ENCODE measurements at regions of chr1 and their contacts with region 1.

Region 1: DNA sequence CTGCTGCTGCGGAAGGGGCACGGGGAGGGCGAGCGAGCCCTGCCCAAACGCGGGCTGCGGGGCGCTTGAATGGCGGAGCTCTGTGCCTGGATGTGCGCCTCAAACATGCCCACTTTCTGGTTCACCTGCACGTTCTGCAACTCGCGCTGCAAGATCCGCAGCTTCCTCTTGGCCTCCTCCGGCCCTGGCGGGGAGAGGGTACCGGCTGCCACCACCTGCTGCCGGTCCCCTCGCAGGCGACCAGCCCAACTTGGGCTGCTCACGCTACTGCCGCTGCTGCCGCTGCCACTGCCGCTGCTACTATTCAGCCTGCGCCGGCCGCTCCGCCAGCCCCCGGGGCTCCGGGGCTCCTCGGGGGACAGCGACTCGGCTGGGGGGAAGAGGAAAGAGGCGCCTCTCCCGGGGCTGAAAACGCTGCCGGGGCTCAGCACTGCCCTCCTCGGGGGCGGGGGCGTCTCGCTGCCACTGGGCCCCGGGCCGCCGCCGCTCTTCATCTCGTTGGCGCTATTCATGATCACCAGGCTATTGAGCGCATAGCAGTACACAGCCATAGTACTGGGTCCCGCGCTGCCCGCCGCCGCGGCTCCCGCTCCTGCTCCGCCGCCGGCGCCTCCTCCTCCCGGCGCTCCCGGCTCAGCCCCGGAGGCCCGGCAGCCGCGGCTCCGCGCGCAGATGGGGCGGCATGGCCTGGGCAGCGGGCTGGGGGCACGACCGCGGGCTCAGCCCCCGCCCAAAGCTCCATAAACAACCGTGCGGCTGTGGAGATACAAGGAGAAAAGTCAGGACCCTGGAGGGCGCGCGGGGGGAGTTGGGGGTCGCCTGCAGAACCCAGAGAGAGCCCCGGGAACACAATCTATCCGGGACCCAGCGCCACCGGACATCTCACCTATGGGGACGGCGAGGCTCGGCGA is 1.9 kb downstream of the ITPKB start:
- DNase-seq: peak; percentile 79
- ATAC-seq: peak; percentile 46
- H3K4me3 Mint-ChIP-seq: peak overlapping the region; percentile 88
- H3K27ac Mint-ChIP-seq: peak overlapping the region; percentile 85
- H3K4me1 Mint-ChIP-seq: peaks cover 42% of the 10 kb centered on the region
- H3K27me3 Mint-ChIP-seq: no peaks in the 10 kb centered on the region

Region 2: GRCh38 chr1:226407497-226408284 is 329.5 kb before region 1 on chr1 and contains the start of gene PARP1:
- CTCF ChIA-PET with region 1: no interaction called
- POLR2A ChIA-PET with region 1: no interaction called
- intact Hi-C with region 1: loop called in 1 of 2 experiments (anchors 5 kb)
- DNase-seq: peak; percentile 93
- ATAC-seq: peak; percentile 94
- H3K4me3 Mint-ChIP-seq: peak within 1 kb of the TSS; percentile 88
- H3K27ac Mint-ChIP-seq: peak within 1 kb of the TSS; percentile 94
- H3K4me1 Mint-ChIP-seq: peaks cover 42% of the 10 kb centered on the region
- H3K27me3 Mint-ChIP-seq: no peaks in the 10 kb centered on the region
- total RNA-seq, gene PARP1: 237 to 242 TPM

Region 3: DNA sequence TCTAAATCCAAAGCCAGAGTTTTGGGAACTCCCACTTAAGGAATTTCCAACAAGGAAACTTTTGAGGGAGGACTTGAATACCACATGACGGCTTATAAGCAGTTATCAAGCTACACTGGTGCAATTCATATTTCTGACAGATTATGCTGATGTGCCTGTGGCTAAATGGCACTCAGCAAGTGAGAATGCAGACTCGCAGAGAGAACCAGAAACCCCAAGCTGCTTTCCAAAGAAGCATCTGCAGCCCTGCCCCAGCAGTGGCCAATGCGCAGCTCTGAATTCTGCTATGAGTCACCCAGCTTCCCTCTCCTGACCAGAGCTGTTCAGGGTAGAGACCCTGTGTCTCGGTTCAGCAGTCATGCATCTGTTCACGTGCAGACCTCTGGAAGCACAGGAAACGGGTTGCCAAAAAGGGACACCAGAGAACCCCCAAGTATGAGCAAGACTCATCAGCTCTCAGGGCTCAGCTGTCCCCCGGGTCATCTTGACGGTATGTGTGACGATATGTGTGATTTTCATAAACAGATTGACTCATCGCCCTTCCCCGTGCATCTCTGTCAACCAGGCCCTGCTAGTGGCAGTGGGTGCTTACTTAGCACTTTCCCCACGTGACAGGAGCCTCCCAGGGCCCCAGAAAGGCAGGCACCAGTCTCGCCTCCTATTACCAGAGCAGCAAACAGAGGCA is 74.4 kb before region 1 on chr1:
- CTCF ChIA-PET with region 1: interaction called, 5 read pairs
- POLR2A ChIA-PET with region 1: interaction called, 4 read pairs
- intact Hi-C with region 1: loop called in 1 of 2 experiments (anchors 1 kb)
- DNase-seq: peak; percentile 91
- ATAC-seq: peak; percentile 93
- H3K4me3 Mint-ChIP-seq: peak overlapping the region; percentile 53
- H3K27ac Mint-ChIP-seq: peak overlapping the region; percentile 94
- H3K4me1 Mint-ChIP-seq: no peaks in the 10 kb centered on the region
- H3K27me3 Mint-ChIP-seq: no peaks in the 10 kb centered on the region

Region 4: DNA sequence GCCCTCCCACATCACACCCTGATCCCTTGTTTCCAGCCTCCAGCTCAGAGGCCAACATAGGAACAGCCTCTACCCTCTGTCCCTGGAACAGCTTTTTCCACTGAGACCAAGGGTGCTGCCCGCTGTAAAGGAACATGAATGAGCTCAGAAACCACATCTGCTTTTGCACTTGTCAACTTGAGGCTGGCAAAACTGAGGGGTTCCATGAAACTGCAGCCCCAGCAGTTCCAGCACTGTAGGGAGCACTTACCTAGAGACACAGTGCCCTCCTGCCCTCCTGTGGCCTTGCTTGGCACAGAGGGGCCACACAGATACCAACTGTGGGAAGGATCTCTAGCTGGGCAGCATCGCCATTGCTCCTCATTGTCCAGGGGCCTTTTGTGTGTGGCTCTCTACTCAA is 49.7 kb before region 1 on chr1:
- CTCF ChIA-PET with region 1: interaction called, 4 read pairs
- POLR2A ChIA-PET with region 1: interaction called, 3 read pairs
- intact Hi-C with region 1: loop called (anchors 1 to 2 kb)
- DNase-seq: peak; percentile 75
- ATAC-seq: peak; percentile 36
- H3K4me3 Mint-ChIP-seq: no peak overlapping the region
- H3K27ac Mint-ChIP-seq: peak overlapping the region; percentile 100
- H3K4me1 Mint-ChIP-seq: peaks cover 100% of the 10 kb centered on the region
- H3K27me3 Mint-ChIP-seq: no peaks in the 10 kb centered on the region

Region 5: GRCh38 chr1:226708342-226708780 is 28.8 kb before region 1 on chr1:
- CTCF ChIA-PET with region 1: interaction called, 10 read pairs
- POLR2A ChIA-PET with region 1: interaction called, 6 read pairs
- intact Hi-C with region 1: loop called (anchors 1 to 5 kb)
- DNase-seq: peak; percentile 63
- ATAC-seq: peak; percentile 75
- H3K4me3 Mint-ChIP-seq: peak overlapping the region; percentile 34
- H3K27ac Mint-ChIP-seq: peak overlapping the region; percentile 100
- H3K4me1 Mint-ChIP-seq: peaks cover 93% of the 10 kb centered on the region
- H3K27me3 Mint-ChIP-seq: no peaks in the 10 kb centered on the region

Region 6: GRCh38 chr1:226827968-226828513 is 90.9 kb after region 1 on chr1:
- CTCF ChIA-PET with region 1: interaction called, 5 read pairs
- POLR2A ChIA-PET with region 1: interaction called, 3 read pairs
- intact Hi-C with region 1: loop called (anchors 1 kb)
- DNase-seq: peak; percentile 99
- ATAC-seq: peak; percentile 99
- H3K4me3 Mint-ChIP-seq: peak overlapping the region; percentile 44
- H3K27ac Mint-ChIP-seq: peak overlapping the region; percentile 94
- H3K4me1 Mint-ChIP-seq: peaks cover 41% of the 10 kb centered on the region
- H3K27me3 Mint-ChIP-seq: no peaks in the 10 kb centered on the region

Region 7: DNA sequence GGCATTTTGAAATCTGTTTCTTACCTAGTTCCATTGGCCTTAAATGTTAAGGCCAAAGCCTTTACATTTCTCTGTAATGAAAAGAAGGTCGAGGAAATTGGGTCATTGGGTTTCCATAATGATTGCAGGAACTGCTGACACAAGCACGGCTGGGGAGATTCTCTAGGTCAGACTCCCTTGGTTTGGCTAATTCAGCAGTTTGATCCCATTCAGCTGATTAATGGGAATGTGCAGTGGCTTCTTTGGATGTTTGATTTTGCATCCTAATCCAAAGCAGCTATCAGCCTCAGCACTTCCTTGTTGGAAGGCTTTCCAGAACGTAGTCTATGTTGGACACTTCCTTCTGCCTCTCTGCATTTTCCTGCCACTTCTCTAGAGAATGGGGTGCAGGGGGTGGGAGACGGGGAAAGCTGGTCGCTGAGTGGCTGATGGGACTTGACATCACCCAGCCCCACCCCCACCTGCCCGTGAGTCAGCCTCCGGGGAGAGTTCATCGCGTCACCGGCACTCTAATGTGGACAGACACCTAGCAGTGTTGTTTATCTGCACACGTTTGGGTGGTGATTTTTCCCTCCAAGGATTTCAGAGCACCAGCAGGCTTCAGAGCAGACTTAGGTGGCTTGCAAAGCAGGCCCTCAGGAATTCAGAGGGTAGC is 138.6 kb after region 1 on chr1:
- CTCF ChIA-PET with region 1: no interaction called
- POLR2A ChIA-PET with region 1: no interaction called
- intact Hi-C with region 1: no loop called
- DNase-seq: peak; percentile 37
- ATAC-seq: no peak
- H3K4me3 Mint-ChIP-seq: no peak overlapping the region
- H3K27ac Mint-ChIP-seq: no peak overlapping the region
- H3K4me1 Mint-ChIP-seq: peaks cover 5% of the 10 kb centered on the region
- H3K27me3 Mint-ChIP-seq: peaks cover 10% of the 10 kb centered on the region

Measured in activated CD4-positive, alpha-beta T cell treated with anti-CD3 and anti-CD28 coated beads for 36 hours (primary cell).